ENCODE measurements at regions of chr3 and their contacts with region 1.

Region 1: GRCh38 chr3:49567406-49567805 is 13.1 kb downstream of the BSN start:
- DNase-seq: no peak
- ATAC-seq: no peak
- H3K4me3 ChIP-seq: no peak overlapping the region
- H3K27ac ChIP-seq: no peak overlapping the region
- H3K4me1 ChIP-seq: no peaks in the 10 kb centered on the region
- H3K27me3 ChIP-seq: no peaks in the 10 kb centered on the region
- CTCF ChIP-seq: no peak

Region 2: GRCh38 chr3:49217688-49218470 is 349.5 kb before region 1 on chr3:
- CTCF ChIA-PET with region 1: no interaction called
- POLR2A ChIA-PET with region 1: no interaction called
- in situ Hi-C with region 1: no loop called
- intact Hi-C with region 1: no loop called
- DNase-seq: no peak
- ATAC-seq: peak; percentile 63; the same call in 1 of the 2 replicates
- H3K4me3 ChIP-seq: no peak overlapping the region
- H3K27ac ChIP-seq: 0 out of 2 replicates have a peak overlapping the region, but pooled peaks have one; percentile 11
- H3K4me1 ChIP-seq: 0 out of 2 replicates have a peak, but pooled peaks cover 2% of the 10 kb centered on the region
- H3K27me3 ChIP-seq: no peaks in the 10 kb centered on the region
- CTCF ChIP-seq: no peak

Region 3: GRCh38 chr3:49519296-49519695 is 48.1 kb before region 1 on chr3:
- CTCF ChIA-PET with region 1: interaction called, 13 read pairs
- POLR2A ChIA-PET with region 1: no interaction called
- in situ Hi-C with region 1: no loop called
- intact Hi-C with region 1: no loop called
- DNase-seq: no peak
- ATAC-seq: no peak
- H3K4me3 ChIP-seq: no peak overlapping the region
- H3K27ac ChIP-seq: no peak overlapping the region
- H3K4me1 ChIP-seq: no peaks in the 10 kb centered on the region
- H3K27me3 ChIP-seq: no peaks in the 10 kb centered on the region
- CTCF ChIP-seq: no peak

Region 4: DNA sequence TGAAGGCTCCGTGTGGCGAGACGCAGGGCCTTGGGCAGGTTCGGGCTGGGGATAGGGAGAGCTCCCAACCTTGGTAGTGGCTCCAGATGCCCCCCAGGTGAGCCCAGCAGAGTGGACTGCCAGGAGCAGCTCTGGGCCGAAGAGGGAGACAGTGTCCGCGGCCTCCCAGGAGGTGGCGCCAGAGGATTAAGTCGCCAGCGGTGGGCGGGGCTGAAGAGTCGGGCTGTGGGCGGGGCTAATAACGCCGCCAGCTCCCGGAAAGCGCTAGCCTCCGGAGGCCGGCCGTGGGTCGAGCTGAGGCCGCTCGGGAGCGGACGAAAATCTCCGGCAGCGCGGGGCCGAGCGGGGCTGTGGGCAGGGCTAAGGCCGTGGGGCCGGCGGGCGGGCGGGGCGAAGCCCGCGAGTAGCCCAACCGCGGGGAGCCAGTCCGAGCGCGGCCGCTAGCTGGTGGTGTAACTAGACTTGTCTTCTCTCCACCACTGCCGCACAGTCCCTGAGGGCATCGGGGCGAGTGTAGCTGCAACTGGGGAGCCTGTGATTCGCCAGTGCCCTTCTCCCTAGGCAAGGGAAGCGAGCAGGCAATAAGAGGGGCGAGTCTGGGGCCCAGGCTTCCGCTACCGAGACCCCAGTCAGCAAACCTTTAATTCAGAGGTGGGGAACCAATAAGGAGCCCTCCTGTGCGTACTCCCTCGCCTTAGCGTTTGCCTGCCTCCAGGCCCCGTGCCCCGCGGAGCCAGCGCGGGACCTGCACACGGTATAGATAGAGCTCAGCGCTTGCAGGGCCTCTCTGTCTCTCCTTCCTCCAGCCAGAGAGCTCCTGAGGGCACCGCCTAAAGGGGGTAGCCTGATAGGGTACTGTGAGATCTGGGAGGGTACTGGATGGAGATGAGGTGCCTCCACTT is 27.5 kb before region 1 on chr3:
- CTCF ChIA-PET with region 1: interaction called, 23 read pairs
- POLR2A ChIA-PET with region 1: no interaction called
- in situ Hi-C with region 1: no loop called
- intact Hi-C with region 1: no loop called
- DNase-seq: peak; percentile 39
- ATAC-seq: peak; percentile 98
- H3K4me3 ChIP-seq: peak overlapping the region; percentile 50 to 63
- H3K27ac ChIP-seq: peak overlapping the region; percentile 72
- H3K4me1 ChIP-seq: peaks cover 4% of the 10 kb centered on the region; the same call in 1 of the 2 replicates
- H3K27me3 ChIP-seq: no peaks in the 10 kb centered on the region
- CTCF ChIP-seq: peak; percentile 92